ENCODE measurements at regions of chr17 and their contacts with region 1.

Region 1: GRCh38 chr17:59837308-59838051 is 55.3 kb downstream of the TUBD1 start:
- DNase-seq: peak; percentile 74
- CTCF ChIP-seq: no peak

Region 2: DNA sequence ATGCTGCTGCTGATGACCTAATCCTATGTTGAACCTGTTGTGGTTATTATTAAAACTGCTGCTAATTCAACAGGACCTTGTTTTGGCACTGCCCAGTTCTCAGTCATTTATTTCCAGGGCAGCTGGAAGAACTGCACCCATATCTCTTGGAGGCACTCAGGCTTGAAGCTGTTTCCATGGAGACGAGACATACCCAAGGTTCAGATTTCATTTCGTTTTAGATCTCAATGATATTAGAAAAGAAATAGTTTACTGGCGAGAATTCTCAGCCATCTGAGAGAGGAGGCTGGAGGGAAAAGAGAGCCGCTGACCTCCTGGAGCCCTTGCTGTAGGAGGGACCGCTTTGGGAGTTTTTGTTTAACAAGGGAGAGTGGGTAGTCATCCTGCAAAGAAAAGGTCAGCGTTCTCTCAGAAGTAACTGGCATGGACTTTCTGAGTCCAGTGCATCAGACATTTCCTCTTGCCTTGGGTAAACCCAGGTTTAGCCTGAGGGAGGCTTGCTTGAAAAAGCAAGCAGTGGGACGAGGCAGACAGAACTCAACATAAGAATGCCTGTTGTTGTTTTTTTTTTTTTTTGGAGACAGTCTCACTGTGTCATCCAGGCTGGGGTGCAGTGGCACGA is 430.6 kb before region 1 on chr17:
- CTCF ChIA-PET with region 1: no interaction called
- POLR2A ChIA-PET with region 1: no interaction called
- DNase-seq: no peak
- CTCF ChIP-seq: no peak

Region 3: GRCh38 chr17:59627770-59628171 is 209.7 kb before region 1 on chr17:
- CTCF ChIA-PET with region 1: no interaction called
- POLR2A ChIA-PET with region 1: no interaction called
- DNase-seq: peak; percentile 22
- CTCF ChIP-seq: no peak

Region 4: DNA sequence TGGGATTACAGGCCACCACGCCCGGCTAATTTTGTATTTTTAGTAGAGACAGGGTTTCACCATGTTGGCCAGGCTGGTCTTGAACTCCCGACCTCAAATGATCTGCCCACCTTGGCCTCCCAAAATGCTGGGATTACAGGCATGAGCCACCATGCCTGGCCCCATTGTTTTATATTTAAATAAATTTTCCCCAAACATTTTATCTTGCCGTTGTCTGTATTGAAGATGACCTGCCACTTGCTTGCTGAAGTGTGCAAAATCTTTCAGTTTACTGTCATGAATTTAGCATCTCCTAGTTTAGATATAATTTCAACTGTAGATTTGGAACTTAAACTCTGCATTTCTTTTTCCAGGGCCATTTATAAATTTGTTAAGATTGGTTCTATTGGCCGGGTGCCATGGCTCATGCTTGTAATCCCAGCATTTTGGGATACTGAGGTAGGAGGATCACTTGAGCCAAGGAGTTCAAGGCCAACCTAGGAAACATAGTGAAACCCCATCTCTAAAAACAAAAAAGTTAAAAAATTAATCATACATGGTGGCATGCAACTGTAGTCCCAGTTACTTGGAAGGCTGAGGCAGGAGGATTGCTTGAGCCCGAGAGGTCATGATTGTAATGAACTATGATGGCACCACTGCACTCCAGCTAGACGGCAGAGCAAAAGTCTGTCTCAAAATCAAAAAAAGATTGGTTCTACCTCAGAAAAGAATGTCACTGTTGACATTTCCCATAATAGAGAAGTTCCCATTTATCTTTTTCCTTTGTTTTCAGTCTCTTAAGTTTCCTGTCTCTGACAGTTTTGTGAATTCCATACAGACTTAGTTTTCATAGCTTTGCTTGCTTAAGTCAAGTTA is 45.6 kb before region 1 on chr17:
- CTCF ChIA-PET with region 1: interaction called, 3 read pairs
- POLR2A ChIA-PET with region 1: interaction called, 11 read pairs
- DNase-seq: no peak
- CTCF ChIP-seq: no peak

Region 5: GRCh38 chr17:59859444-59860025 is 22.1 kb after region 1 on chr17:
- CTCF ChIA-PET with region 1: interaction called, 12 read pairs
- POLR2A ChIA-PET with region 1: interaction called, 3 read pairs
- DNase-seq: peak; percentile 24
- CTCF ChIP-seq: peak; percentile 51